ENCODE measurements at regions of chr10 and their contacts with region 1.

Region 1: DNA sequence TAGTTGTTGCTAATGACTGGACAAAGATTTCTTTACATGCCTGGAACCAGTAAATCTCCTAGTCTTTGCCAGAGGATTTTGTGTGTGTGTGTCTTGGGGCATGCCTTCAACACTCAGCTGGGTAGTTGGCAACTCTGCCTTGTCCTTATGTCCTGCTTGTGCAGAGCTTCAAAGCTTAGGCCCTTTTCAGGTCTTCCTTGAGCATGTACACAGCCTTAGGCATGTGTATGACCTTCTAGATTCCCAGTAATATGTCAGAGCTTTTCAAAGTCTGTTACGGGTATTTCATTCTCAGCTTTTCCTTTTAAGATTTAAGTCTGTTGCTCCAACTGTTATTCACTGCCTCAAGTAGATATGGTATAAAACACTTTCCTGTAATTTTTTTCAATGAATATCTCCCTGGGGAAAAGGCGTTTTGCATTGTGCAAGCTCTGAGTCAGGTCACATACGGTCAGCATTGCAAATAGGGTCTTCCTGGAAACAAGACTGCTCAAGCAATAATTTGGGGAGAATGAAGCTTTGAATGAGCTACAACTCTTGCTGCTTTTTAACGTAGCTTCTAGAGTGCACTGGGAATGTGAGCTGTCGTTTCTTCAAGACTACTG is 25.5 kb downstream of the SHOC2 start:
- DNase-seq: no peak
- ATAC-seq: peak; percentile 27
- H3K4me3 ChIP-seq: no peak overlapping the region
- H3K27ac ChIP-seq: no peak overlapping the region
- H3K4me1 ChIP-seq: no peaks in the 10 kb centered on the region
- H3K27me3 ChIP-seq: no peaks in the 10 kb centered on the region
- CTCF ChIP-seq: no peak
- EP300 ChIP-seq: no peak
- POLR2A ChIP-seq: no peak
- RAD21 ChIP-seq: no peak

Region 2: DNA sequence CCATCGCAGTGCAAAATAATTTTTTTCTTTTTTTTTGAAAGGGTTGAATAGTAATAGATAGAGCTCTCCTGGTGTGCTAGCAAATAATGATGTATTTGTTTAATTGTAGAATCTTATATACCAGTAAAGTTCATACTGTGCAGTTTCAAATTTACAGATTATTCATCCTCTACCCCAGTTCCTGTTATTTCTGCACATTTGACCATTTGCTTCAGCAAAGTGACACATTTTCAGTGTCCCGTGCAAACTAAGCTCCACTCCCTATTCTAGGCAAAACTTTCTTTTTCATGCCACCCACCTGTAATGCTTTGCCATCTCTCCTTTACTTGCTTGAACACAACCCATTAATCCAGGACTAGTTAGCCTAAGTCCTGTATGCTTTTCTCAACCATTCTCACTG is 17.5 kb after region 1 on chr10:
- CTCF ChIA-PET with region 1: interaction called, 12 read pairs
- POLR2A ChIA-PET with region 1: interaction called, 3 read pairs
- RAD21 ChIA-PET with region 1: interaction called, 3 read pairs
- SMC1A ChIA-PET with region 1: interaction called, 8 read pairs
- in situ Hi-C with region 1: no loop called
- intact Hi-C with region 1: no loop called
- DNase-seq: no peak
- ATAC-seq: peak; percentile 41
- H3K4me3 ChIP-seq: no peak overlapping the region
- H3K27ac ChIP-seq: no peak overlapping the region; the same call in 1 of the 2 replicates
- H3K4me1 ChIP-seq: peaks cover 6% of the 10 kb centered on the region; the same call in 1 of the 2 replicates
- H3K27me3 ChIP-seq: no peaks in the 10 kb centered on the region
- CTCF ChIP-seq: no peak
- EP300 ChIP-seq: no peak
- POLR2A ChIP-seq: no peak
- RAD21 ChIP-seq: no peak